Dendritic cell treated with granulocyte-macrophage colony-stimulating factor and Interleukin-4, amounts not matched to agents 40 ng/mL and 50 ng/mL, for 4 days (primary cell): ENCODE measurements at regions of chr5 and their contacts with region 1.

Region 1: DNA sequence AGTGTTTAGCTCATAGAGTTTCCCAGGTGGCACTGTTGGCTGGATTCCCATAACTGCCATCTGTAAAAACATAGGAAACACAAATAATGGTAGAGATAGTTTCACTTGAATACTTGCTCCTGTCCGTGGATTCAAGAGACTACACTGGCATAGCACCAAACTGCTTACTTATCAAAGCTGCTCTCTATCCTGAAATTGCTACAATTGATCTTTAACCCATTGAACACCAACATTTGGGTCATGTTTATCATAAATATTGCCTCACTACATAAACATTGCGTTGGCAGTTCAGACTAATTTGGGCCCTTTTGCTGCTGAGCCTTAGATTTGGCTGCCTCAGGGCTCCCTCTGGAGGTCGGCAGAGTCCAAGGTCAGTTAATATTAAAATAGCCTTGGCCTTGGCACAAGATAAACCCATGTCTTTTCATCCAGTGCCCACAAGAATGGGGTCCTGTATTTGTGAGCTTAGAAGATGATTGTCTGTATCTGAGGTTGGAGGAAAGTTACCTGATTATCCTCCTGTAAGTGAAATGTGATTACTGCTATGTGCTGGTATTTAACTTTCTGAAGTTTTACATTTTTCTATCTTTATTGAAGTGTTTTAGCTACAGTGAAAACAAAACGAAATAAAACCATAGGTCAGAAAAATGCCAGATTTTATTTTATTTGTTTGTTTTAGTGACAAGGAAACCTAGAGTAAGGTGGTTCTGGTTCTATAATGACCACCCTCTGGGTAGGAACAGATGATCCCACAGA is 4.0 kb upstream of the RANBP3L start:
- H3K4me3 Mint-ChIP-seq: no peak overlapping the region
- H3K27ac Mint-ChIP-seq: no peak overlapping the region
- H3K4me1 Mint-ChIP-seq: peaks cover 5% of the 10 kb centered on the region
- H3K27me3 Mint-ChIP-seq: peaks cover 2% of the 10 kb centered on the region

Region 2: GRCh38 chr5:36177715-36178523 is 127.8 kb before region 1 on chr5:
- intact Hi-C with region 1: loop called (anchors 10 kb)
- H3K4me3 Mint-ChIP-seq: no peak overlapping the region
- H3K27ac Mint-ChIP-seq: no peak overlapping the region
- H3K4me1 Mint-ChIP-seq: no peaks in the 10 kb centered on the region
- H3K27me3 Mint-ChIP-seq: no peaks in the 10 kb centered on the region